ENCODE measurements at regions of chr10 and their contacts with region 1.

Region 1: GRCh38 chr10:95693668-95694534 is at the start of gene TCTN3:
- DNase-seq: peak; percentile 95 to 99
- H3K4me3 ChIP-seq: peak within 1 kb of the TSS; percentile 78 to 93
- H3K27ac ChIP-seq: peak within 1 kb of the TSS; percentile 59 to 84
- H3K4me1 ChIP-seq: peaks cover 5 to 8% of the 10 kb centered on the region in 2 donors
- H3K27me3 ChIP-seq: no peaks in the 10 kb centered on the region
- CTCF ChIP-seq: peak; percentile 97 to 99 (median 98)
- total RNA-seq, gene TCTN3: 22.1 TPM

Region 2: GRCh38 chr10:95308389-95309302 is 385.3 kb before region 1 on chr10:
- intact Hi-C with region 1: no loop called
- DNase-seq: peak in 1 of 2 donors; percentile 97
- H3K4me3 ChIP-seq: no peak overlapping the region
- H3K27ac ChIP-seq: peak overlapping the region; percentile 68 to 80
- H3K4me1 ChIP-seq: peaks cover 16 to 46% of the 10 kb centered on the region in 2 donors
- H3K27me3 ChIP-seq: no peaks in the 10 kb centered on the region
- CTCF ChIP-seq: no peak

Region 3: DNA sequence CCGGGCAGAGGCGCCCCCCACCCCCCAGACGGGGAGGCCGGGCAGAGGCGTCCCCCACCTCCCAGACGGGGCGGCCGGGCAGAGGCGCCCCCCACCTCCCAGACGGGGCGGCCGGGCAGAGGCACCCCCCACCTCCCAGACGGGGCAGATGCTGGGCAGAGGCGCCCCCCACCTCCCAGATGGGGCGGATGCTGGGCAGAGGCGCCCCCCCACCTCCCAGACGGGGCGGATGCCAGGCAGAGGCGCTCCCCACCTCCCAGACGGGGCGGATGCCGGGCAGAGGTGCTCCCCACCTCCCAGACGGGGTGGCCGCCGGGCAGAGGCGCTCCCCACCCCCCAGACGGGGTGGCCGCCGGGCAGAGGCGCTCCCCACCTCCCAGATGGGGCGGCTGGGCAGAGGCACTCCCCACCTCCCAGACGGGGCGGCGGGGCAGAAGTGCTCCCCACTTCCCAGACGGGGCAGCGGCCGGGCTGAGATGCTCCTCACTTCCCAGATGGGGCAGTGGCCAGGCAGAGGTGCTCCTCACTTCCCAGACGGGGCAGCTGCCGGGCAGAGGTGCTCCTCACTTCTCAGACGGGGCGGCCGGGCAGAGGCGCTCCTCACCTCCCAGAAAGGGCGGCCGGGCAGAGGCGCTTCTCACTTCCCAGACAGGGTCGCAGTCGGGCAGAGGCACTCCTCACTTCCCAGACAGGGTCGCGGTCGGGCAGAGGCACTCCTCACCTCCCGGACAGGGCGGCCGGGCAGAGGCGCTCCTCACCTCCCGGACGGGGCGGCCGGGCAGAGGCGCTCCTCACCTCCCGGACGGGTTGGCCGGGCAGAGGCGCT is 115.7 kb after region 1 on chr10:
- intact Hi-C with region 1: no loop called
- DNase-seq: no peak
- H3K4me3 ChIP-seq: no peak overlapping the region
- H3K27ac ChIP-seq: no peak overlapping the region
- H3K4me1 ChIP-seq: peaks cover 0 to 3% of the 10 kb centered on the region in 2 donors
- H3K27me3 ChIP-seq: no peaks in the 10 kb centered on the region
- CTCF ChIP-seq: no peak

Region 4: DNA sequence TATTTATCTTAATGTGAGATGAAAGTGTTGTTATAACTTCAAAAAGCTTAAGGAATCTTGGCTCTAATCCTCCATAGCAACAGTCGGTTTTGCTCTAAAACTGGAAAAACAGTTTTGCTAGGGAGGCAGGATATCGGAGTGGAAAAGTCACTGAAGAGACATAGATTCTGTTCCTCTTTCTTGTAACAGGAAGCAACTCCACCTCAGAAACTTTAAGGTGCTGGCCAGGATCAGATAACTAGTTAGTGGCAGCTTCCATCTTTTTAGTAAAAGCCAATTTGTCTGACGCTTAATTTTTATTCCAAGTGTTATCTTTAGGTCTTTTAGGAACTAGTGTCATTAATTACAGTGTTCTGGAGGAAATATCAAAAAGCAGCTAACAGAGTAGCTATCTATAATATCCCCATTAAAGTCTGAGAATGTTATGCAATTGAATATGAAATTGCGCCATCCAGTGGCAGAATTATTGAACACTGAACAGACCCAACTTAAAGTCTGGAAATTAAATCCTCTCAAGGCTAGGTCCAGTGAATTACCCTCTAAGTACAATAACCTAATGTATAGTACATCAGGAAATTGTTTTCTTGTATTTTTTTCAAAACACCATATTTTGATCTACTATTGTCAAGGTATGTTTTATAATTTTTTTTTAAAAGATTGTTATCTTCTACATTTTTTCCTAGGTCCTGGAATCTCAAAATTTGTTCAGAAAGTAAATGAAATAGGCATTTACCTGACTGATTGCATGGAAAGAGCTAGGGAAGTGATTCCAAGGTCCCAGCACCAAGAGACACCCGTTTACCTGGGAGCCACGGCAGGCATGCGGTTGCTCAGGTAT is 148.0 kb after region 1 on chr10:
- intact Hi-C with region 1: loop called (anchors 1 kb)
- DNase-seq: no peak
- H3K4me3 ChIP-seq: no peak overlapping the region
- H3K27ac ChIP-seq: peak overlapping the region; percentile 25 to 57
- H3K4me1 ChIP-seq: peaks cover 0 to 18% of the 10 kb centered on the region in 2 donors
- H3K27me3 ChIP-seq: no peaks in the 10 kb centered on the region
- CTCF ChIP-seq: peak; percentile 56 to 77 (median 64)

Region 5: GRCh38 chr10:95907456-95908253 is 213.8 kb after region 1 on chr10 and contains the start of gene CC2D2B:
- intact Hi-C with region 1: loop called (anchors 2 kb)
- DNase-seq: peak; percentile 26 to 91
- H3K4me3 ChIP-seq: peak within 1 kb of the TSS; percentile 73 to 80
- H3K27ac ChIP-seq: peak within 1 kb of the TSS; percentile 82 to 83
- H3K4me1 ChIP-seq: peaks cover 0 to 4% of the 10 kb centered on the region in 2 donors
- H3K27me3 ChIP-seq: no peaks in the 10 kb centered on the region
- CTCF ChIP-seq: peak in 2 of 3 experiments; percentile 11 to 23
- total RNA-seq, gene CC2D2B: 3.9 TPM

Region 6: GRCh38 chr10:96089670-96090462 is 396.0 kb after region 1 on chr10:
- intact Hi-C with region 1: loop called (anchors 5 kb)
- DNase-seq: peak; percentile 73 to 97
- H3K4me3 ChIP-seq: peak overlapping the region; percentile 68 to 88
- H3K27ac ChIP-seq: peak overlapping the region; percentile 79 to 92
- H3K4me1 ChIP-seq: peaks cover 0 to 3% of the 10 kb centered on the region in 2 donors
- H3K27me3 ChIP-seq: no peaks in the 10 kb centered on the region
- CTCF ChIP-seq: no peak